Left ventricle myocardium inferior (tissue), 1 donor: ENCODE measurements at regions of chr15 and their contacts with region 1.

Region 1: GRCh38 chr15:57667171-57667849 is 39.2 kb upstream of the POLR2M start:
- DNase-seq: no peak
- H3K4me3 ChIP-seq: peak overlapping the region; percentile 7
- H3K27ac ChIP-seq: peak overlapping the region; percentile 29
- H3K4me1 ChIP-seq: peaks cover 50% of the 10 kb centered on the region
- H3K27me3 ChIP-seq: no peaks in the 10 kb centered on the region
- CTCF ChIP-seq: peak; percentile 65

Region 2: DNA sequence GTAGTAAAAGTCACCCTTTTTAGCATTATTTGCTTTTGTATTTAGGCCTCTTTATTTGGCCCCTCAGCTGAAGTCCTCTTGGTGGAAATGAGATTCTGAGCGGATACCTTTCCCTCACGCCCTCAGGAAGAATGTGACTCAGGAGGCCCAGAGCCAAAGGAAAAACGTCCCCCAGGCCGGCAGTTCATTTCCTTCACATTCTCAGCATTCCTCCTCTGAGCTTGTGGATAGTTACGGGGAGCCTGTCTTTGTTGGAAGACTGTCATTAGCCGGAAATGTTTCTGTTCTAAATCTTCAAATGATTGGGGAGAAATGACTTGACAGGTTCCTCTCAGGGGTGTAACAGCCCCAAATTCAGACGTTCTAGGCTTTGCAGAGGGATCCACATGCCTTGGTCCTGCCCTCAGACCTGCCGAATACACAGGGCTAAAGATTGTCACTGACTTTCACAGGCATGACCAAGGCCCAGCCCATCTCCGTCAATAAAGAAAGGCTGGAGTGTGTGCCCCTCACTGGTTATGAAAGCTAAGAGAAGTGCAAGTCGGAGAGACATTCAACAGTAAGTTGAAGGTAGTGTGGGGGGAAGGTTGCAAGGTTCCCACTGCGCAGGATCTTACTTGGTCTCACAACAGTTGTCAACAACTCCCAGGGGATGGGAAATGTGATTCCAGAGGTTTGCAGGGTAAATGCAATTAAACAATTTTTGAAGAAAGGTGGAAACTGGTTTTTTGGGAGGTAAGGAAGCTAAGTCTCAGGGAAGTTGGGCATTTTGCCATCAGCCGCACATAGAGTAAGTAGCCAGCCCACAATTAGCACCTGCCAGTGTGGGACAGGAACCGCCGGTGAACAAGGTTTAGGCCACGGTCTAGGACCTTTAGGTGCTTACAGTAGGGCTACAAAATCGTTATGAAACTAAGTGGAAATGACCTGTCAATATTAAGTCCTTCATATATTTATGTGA is 115.3 kb before region 1 on chr15:
- intact Hi-C with region 1: no loop called
- DNase-seq: peak; percentile 34
- H3K4me3 ChIP-seq: no peak overlapping the region
- H3K27ac ChIP-seq: peak overlapping the region; percentile 95
- H3K4me1 ChIP-seq: peaks cover 72% of the 10 kb centered on the region
- H3K27me3 ChIP-seq: no peaks in the 10 kb centered on the region
- CTCF ChIP-seq: no peak

Region 3: DNA sequence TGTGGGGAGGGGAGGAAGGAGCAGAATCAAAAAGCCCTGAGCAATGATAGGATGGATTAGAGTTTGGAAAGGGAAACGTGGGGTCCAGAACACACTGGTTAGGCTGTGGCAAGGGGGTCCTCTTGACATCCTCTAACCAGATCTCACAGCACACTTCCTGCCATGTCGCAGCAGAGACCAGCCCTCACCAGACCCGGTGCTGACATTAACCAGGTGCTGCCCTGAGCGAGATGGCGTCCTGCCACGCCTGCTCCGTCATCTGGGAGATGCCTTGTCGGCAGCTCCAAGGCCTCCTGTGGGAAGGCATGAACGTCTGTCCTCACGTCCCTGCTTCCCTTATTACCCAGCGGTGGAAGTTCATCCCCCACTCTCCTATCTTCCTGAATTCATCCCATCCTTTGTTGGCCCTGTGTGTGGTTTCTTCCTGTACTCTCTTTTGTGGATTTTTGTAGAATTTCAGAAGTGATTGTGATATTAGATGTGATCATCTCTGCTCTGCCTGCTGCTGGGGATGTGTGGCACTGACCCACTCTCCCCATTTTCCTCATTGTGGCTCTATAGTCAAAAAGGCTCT is 105.0 kb before region 1 on chr15:
- intact Hi-C with region 1: no loop called
- DNase-seq: peak; percentile 79
- H3K4me3 ChIP-seq: no peak overlapping the region
- H3K27ac ChIP-seq: peak overlapping the region; percentile 71
- H3K4me1 ChIP-seq: peaks cover 51% of the 10 kb centered on the region
- H3K27me3 ChIP-seq: no peaks in the 10 kb centered on the region
- CTCF ChIP-seq: no peak

Region 4: DNA sequence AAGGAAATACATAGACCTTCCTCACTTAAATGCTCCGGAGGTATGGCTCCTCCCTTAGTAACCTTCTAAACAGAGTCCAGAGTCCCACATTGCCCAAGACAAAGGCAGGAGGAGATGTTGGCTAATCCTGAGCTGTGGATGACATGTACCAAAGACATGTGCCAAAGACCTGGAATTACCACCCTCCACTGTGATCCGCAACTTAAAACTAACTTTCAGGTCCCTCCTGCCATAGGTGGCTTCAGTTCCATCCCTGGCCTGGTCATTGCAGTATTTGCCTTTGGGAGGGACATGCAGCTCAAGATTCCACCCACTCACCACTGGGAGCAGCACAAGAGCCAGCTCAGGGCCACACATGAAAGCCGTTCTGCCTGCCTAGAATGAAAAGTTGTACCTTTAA is 47.6 kb before region 1 on chr15:
- intact Hi-C with region 1: no loop called
- DNase-seq: no peak
- H3K4me3 ChIP-seq: no peak overlapping the region
- H3K27ac ChIP-seq: peak overlapping the region; percentile 95
- H3K4me1 ChIP-seq: peaks cover 96% of the 10 kb centered on the region
- H3K27me3 ChIP-seq: no peaks in the 10 kb centered on the region
- CTCF ChIP-seq: peak; percentile 31

Region 5: GRCh38 chr15:57732526-57733331 is 65.4 kb after region 1 on chr15:
- intact Hi-C with region 1: loop called (anchors 10 kb)
- DNase-seq: peak; percentile 28
- H3K4me3 ChIP-seq: no peak overlapping the region
- H3K27ac ChIP-seq: no peak overlapping the region
- H3K4me1 ChIP-seq: peaks cover 16% of the 10 kb centered on the region
- H3K27me3 ChIP-seq: no peaks in the 10 kb centered on the region
- CTCF ChIP-seq: peak; percentile 90